H1 (cell line): ENCODE measurements at regions of chr2 and their contacts with region 1.

Region 1: GRCh38 chr2:9799665-9800632 is 43.3 kb upstream of the TAF1B start:
- DNase-seq: peak; percentile 83 to 99
- H3K4me3 ChIP-seq: no peak overlapping the region
- H3K27ac ChIP-seq: no peak overlapping the region
- H3K4me1 ChIP-seq: peaks cover 0 to 8% (median 2%) of the 10 kb centered on the region in 4 experiments; a peak in 4 of 7 replicates
- H3K27me3 ChIP-seq: no peaks in the 10 kb centered on the region
- CTCF ChIP-seq: peak; percentile 99 to 100 (median 99)
- EP300 ChIP-seq: no peak
- POLR2A ChIP-seq: no peak
- RAD21 ChIP-seq: peak; percentile 91 to 94

Region 2: DNA sequence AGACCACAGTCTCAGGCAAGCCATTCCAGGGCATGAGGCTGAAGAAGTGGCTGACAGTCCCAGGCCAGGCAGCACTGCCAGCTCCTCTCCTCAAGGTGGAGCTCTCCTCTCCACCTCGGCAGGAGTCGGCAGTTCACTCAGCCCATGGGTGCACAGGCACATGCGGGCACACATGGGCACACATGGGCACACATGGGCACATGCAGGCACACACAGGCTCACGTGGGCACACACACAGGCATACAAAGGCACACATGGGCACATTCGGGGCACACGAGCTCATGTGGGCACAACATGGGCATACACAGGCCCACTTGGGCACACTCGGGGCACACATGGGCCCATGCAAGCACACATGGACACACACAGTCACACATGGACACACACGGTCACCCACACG is 21.9 kb before region 1 on chr2:
- CTCF ChIA-PET with region 1: interaction called, 50 read pairs
- POLR2A ChIA-PET with region 1: interaction called, 3 read pairs
- DNase-seq: no peak
- H3K4me3 ChIP-seq: no peak overlapping the region
- H3K27ac ChIP-seq: no peak overlapping the region
- H3K4me1 ChIP-seq: 0 out of 7 replicates have a peak, but pooled peaks cover 0 to 2% (median 0%) of the 10 kb centered on the region in 4 experiments
- H3K27me3 ChIP-seq: no peaks in the 10 kb centered on the region
- CTCF ChIP-seq: peak in 2 of 3 experiments; percentile 60 to 82; a peak in 3 of 4 replicates
- EP300 ChIP-seq: no peak
- POLR2A ChIP-seq: no peak
- RAD21 ChIP-seq: peak; percentile 51 to 56

Region 3: GRCh38 chr2:9830690-9831410 is 30.9 kb after region 1 on chr2:
- CTCF ChIA-PET with region 1: interaction called, 11 read pairs
- POLR2A ChIA-PET with region 1: no interaction called
- DNase-seq: no peak
- H3K4me3 ChIP-seq: no peak overlapping the region
- H3K27ac ChIP-seq: no peak overlapping the region
- H3K4me1 ChIP-seq: peaks cover 0 to 5% (median 2%) of the 10 kb centered on the region in 4 experiments; a peak in 3 of 7 replicates
- H3K27me3 ChIP-seq: no peaks in the 10 kb centered on the region; a peak in 1 of 7 replicates
- CTCF ChIP-seq: no peak
- EP300 ChIP-seq: no peak
- POLR2A ChIP-seq: no peak
- RAD21 ChIP-seq: no peak

Region 4: GRCh38 chr2:10019174-10019573 is 219.2 kb after region 1 on chr2:
- CTCF ChIA-PET with region 1: interaction called, 13 read pairs
- POLR2A ChIA-PET with region 1: no interaction called
- DNase-seq: no peak
- H3K4me3 ChIP-seq: no peak overlapping the region
- H3K27ac ChIP-seq: no peak overlapping the region
- H3K4me1 ChIP-seq: no peaks in the 10 kb centered on the region
- H3K27me3 ChIP-seq: no peaks in the 10 kb centered on the region
- CTCF ChIP-seq: no peak
- EP300 ChIP-seq: no peak
- POLR2A ChIP-seq: no peak
- RAD21 ChIP-seq: no peak

Region 5: DNA sequence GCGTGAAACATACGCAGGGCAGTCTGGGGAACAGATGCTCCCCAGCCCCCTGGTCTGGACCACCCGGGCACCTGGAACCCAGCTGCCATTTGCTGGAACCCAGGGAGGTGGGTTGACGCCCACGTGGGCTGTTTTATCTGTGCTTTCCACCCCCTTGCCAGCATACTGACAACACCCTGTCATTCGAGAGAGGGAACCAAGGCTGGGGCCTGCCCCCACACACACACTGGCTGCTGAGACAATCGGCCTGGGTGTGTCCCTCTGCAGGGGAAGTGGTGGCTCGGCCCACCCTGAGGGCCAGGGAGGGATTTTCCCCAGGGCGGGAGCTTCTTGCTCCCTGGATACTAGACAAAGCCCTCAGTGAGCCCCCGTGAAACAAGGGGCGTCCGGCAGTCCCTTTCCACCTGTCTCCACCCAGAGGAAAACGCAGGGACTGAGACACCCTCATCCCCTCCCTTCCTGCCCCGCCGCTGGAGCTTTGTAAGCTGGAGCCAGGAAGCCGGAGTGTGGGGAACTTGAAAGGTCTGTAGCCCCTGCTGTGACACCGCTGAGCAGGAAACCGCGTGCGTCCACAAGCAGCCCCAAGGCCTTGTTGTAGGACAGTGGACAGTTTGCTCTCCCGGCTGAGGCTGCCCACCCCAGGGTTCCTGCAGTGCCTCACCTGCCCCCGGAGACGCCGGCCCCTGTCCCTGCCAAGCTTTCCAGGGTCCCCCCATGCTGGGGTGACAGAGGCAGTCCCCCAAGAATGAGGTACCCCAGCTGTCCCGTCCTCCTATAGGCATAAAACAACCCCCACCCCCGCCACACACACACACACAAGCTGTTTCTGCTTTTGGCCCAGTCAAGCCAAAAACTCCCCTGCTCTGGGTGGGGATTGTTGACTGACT is 229.3 kb after region 1 on chr2:
- CTCF ChIA-PET with region 1: interaction called, 12 read pairs
- POLR2A ChIA-PET with region 1: no interaction called
- DNase-seq: no peak
- H3K4me3 ChIP-seq: no peak overlapping the region
- H3K27ac ChIP-seq: no peak overlapping the region
- H3K4me1 ChIP-seq: peaks cover 0 to 17% (median 7%) of the 10 kb centered on the region in 4 experiments; a peak in 6 of 7 replicates
- H3K27me3 ChIP-seq: no peaks in the 10 kb centered on the region
- CTCF ChIP-seq: no peak; a peak in 1 of 4 replicates
- EP300 ChIP-seq: no peak
- POLR2A ChIP-seq: no peak
- RAD21 ChIP-seq: 0 out of 4 replicates have a peak, but pooled peaks of 1 of the 2 experiments have one; percentile 2